AG04450 (cell line): ENCODE measurements at regions of chr2 and their contacts with region 1.

Region 1: DNA sequence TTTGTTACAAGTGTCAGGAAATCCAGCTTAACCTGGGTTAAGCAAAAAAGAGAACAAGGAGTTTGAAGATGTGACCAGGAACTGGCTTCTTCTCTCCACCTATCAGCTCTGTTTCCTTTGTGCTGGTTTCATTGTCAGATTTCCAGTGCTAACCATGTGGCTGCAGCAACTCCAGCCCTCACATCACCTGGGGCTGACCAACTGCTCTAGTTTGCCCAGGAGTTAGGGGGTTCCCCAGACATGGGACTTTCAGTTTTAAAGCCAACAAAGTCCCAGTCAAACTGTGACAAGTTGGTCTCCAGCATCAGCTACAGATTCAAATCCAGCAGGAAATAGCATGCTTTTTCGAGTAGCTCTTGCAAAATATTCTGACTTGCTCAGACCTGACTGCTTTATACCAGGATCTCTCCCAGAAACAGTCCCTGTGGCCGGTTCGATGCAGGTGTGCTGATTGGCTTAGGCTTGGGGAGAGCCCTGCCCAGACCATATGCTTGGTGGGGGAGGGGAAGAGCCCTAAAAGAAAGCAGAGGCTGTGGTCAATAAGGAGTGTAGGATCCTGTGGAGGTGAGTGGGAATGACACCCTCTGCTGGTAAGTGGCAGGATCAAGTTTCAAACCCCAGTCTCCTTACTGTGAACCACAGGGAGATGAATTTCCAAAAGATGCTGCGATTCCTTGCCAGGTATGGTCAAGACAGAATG is 49.5 kb downstream of the KCNE4 start:
- DNase-seq: no peak
- H3K4me3 ChIP-seq: no peak overlapping the region
- H3K27ac ChIP-seq: no peak overlapping the region
- H3K27me3 ChIP-seq: no peaks in the 10 kb centered on the region
- CTCF ChIP-seq: peak; percentile 66

Region 2: DNA sequence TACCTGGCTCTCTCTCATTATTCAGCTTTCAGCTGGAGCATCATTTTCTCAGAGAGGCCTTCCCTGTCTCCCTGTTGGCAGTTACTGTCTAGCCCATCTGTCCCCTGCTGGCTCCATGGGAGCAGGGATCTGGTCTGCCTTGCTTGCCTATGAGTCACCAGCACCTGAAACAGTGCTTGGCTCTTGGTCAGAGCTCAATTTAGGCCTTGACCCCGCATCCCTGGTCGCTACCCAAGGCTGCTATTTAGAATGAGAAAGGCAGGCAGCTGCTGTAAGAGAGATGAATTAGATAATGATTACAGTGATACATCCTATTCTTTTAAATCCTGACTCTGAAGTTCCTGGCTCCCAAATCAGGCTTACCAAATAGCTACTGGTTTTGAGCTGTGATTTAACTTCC is 16.6 kb before region 1 on chr2:
- CTCF ChIA-PET with region 1: interaction called, 12 read pairs
- POLR2A ChIA-PET with region 1: no interaction called
- DNase-seq: no peak
- H3K4me3 ChIP-seq: no peak overlapping the region
- H3K27ac ChIP-seq: no peak overlapping the region
- H3K27me3 ChIP-seq: no peaks in the 10 kb centered on the region
- CTCF ChIP-seq: no peak